CD8-positive, alpha-beta memory T cell (primary cell): ENCODE measurements at regions of chr20 and their contacts with region 1.

Region 1: DNA sequence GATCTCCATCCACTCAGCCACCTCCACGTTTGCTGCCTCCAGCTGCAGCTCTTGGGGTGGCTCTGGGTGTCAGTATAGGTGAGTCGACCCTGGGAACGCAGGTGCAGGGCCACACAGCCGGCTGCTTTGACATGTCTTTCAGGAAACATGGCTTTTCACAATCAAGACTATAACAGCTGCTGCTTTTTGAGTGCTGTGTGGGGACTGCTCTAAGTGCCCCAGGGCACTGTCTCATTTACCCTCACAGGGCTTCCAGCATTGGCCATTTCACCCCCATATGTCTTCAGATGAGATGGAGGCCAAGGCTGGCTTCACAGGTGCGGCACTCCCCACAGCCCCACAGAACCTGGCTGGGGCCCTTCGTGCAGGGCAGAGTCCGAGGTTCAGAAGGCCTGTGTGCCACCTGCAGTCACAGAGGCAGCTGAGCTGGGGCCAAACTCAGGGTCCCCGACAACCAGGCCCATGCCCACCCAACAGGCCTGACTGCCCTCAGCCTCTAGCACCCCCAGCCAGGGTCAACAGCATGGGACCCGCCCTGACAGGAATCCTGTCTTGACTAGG is 14.9 kb upstream of the CST7 start:
- DNase-seq: no peak
- H3K4me3 ChIP-seq: no peak overlapping the region
- H3K4me3 Mint-ChIP-seq: no peak overlapping the region
- H3K27ac ChIP-seq: no peak overlapping the region
- H3K27ac Mint-ChIP-seq: no peak overlapping the region
- H3K4me1 ChIP-seq: peaks cover 30% of the 10 kb centered on the region
- H3K4me1 Mint-ChIP-seq: peaks cover 37 to 48% (median 39%) of the 10 kb centered on the region in 3 donors
- H3K27me3 ChIP-seq: no peaks in the 10 kb centered on the region
- H3K27me3 Mint-ChIP-seq: peaks cover 0 to 2% of the 10 kb centered on the region in 2 donors

Region 2: GRCh38 chr20:24917797-24918578 is 16.2 kb before region 1 on chr20:
- CTCF ChIA-PET with region 1: interaction called, 22 read pairs
- POLR2A ChIA-PET with region 1: no interaction called
- DNase-seq: peak; percentile 26 to 62 (median 29)
- H3K4me3 ChIP-seq: no peak overlapping the region
- H3K4me3 Mint-ChIP-seq: peak overlapping the region in 6 of 7 donors; percentile 1 to 61 (median 40)
- H3K27ac ChIP-seq: no peak overlapping the region
- H3K27ac Mint-ChIP-seq: peak overlapping the region in 3 of 8 donors; percentile 29 to 87 (median 33)
- H3K4me1 ChIP-seq: no peaks in the 10 kb centered on the region
- H3K4me1 Mint-ChIP-seq: peaks cover 2 to 11% (median 6%) of the 10 kb centered on the region in 3 donors
- H3K27me3 ChIP-seq: no peaks in the 10 kb centered on the region
- H3K27me3 Mint-ChIP-seq: peaks cover 8 to 26% of the 10 kb centered on the region in 2 donors

Region 3: DNA sequence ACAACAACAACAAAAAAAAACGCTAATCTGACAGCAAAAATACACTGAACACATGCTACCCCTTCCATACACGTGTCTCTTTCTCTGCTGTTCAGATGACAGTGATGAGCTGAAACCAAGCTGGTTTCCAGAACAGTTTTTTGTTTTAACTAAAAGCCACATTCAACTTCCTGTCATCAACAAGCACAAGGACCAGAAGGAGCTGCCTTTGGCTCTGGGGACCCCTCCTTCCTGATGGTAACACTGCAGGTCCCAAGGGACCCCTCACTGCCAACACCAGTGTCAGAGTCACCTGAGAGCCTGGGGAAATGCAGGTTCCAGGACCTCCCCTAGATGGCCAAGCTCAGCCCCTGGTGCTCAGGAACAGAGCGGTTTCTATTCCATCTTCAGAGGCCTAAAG is 20.9 kb after region 1 on chr20:
- CTCF ChIA-PET with region 1: interaction called, 50 read pairs
- POLR2A ChIA-PET with region 1: interaction called, 13 read pairs
- DNase-seq: peak in 4 of 5 donors; percentile 26 to 57 (median 44)
- H3K4me3 ChIP-seq: no peak overlapping the region
- H3K4me3 Mint-ChIP-seq: peak overlapping the region; percentile 18 to 79 (median 68)
- H3K27ac ChIP-seq: peak overlapping the region; percentile 33
- H3K27ac Mint-ChIP-seq: peak overlapping the region; percentile 86 to 98 (median 94)
- H3K4me1 ChIP-seq: peaks cover 62% of the 10 kb centered on the region
- H3K4me1 Mint-ChIP-seq: peaks cover 66 to 95% (median 74%) of the 10 kb centered on the region in 3 donors
- H3K27me3 ChIP-seq: no peaks in the 10 kb centered on the region
- H3K27me3 Mint-ChIP-seq: no peaks in the 10 kb centered on the region

Region 4: DNA sequence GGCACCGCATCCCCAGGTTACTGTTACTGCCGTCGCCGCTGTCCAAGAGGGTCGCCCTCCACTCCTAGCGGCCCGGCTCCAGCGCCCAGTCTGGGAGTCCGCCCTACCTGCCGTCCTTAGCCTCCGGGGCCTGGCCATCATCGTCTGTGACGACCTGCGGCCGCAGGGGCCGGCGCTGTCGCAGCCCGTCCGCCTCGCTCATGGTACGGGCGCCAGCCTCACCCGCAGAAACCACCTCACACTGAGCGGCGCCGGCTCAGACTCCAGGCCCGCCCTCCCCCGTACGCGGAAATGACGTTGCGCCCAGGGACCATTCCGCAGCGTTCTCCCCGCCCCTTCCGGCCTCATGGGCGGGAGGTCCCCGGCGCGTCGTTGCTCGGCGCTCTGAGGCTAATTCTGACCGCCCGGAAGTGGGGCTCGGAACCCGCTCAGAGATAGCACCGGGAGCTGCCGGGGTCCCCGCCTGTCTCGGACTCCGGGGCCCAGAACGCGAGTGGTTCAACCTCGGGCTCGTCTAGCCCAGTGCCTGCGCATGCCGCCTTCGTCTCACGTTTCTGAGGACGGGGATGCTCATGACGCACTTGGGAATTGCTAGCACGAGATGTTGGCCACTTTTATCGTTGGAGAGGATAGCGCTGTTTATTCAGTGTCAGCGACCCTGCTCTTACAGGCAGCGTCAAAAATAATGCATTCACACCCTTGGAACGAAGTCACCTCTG is 58.5 kb after region 1 on chr20 and contains the start of gene APMAP:
- CTCF ChIA-PET with region 1: interaction called, 18 read pairs
- POLR2A ChIA-PET with region 1: no interaction called
- DNase-seq: peak; percentile 94 to 97 (median 95)
- H3K4me3 ChIP-seq: peak within 1 kb of the TSS; percentile 84
- H3K4me3 Mint-ChIP-seq: peak within 1 kb of the TSS; percentile 94 to 99 (median 96)
- H3K27ac ChIP-seq: peak within 1 kb of the TSS; percentile 95
- H3K27ac Mint-ChIP-seq: peak within 1 kb of the TSS; percentile 97 to 100 (median 98)
- H3K4me1 ChIP-seq: peaks cover 60% of the 10 kb centered on the region
- H3K4me1 Mint-ChIP-seq: peaks cover 60 to 71% (median 67%) of the 10 kb centered on the region in 3 donors
- H3K27me3 ChIP-seq: no peaks in the 10 kb centered on the region
- H3K27me3 Mint-ChIP-seq: peaks cover 0 to 6% of the 10 kb centered on the region in 2 donors
- total RNA-seq, gene APMAP: 82.5 to 83.6 TPM

Region 5: GRCh38 chr20:25090492-25091429 is 156.6 kb after region 1 on chr20:
- CTCF ChIA-PET with region 1: interaction called, 12 read pairs
- POLR2A ChIA-PET with region 1: no interaction called
- DNase-seq: peak; percentile 64 to 89 (median 80)
- H3K4me3 ChIP-seq: peak overlapping the region; percentile 29
- H3K4me3 Mint-ChIP-seq: peak overlapping the region; percentile 4 to 82 (median 60)
- H3K27ac ChIP-seq: no peak overlapping the region
- H3K27ac Mint-ChIP-seq: peak overlapping the region; percentile 74 to 98 (median 84)
- H3K4me1 ChIP-seq: peaks cover 38% of the 10 kb centered on the region
- H3K4me1 Mint-ChIP-seq: peaks cover 36 to 39% (median 38%) of the 10 kb centered on the region in 3 donors
- H3K27me3 ChIP-seq: peaks cover 2% of the 10 kb centered on the region
- H3K27me3 Mint-ChIP-seq: peaks cover 6 to 13% of the 10 kb centered on the region in 2 donors